Endothelial cell of umbilical vein (primary cell): ENCODE measurements at regions of chr15 and their contacts with region 1.

Region 1: DNA sequence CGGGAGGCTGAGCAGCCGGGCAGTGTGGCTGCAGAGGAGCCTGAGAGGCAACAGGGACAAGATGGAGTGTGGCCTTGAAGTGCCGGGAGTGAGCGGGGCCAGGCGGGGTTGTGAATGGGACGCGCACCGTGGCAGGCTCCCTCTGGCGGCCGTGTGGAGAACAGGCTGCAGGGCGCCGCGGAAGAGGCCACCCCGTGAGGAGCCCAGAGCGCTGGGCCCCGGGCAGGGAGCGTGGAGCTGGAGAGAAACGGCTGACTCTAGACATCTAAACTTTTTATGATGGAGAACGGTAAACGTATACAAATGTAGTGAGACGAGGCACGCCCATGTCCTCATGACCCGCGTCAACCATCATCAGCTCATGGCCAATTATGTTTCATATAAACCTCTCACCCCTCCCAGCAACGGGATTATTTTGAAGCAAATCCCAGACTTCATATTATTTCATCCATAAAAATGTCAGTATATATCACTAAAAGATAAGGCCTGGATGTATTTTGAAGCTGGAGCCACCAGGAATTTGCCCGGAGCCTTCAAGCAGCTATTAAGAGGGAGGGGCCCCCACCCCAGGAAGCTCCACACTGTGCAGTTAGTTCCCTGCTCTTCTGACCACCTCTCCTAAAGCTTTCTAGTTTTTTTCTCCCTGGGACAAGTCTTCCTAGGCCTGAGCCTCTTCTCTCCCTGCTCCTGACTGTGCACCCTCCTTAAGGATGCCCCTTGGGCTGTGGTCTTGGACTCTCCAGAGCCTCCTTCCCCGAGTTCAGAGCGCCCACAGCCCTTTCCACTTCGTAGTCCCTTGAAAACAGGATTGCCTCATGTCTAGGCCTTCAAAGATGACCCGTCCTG is 149.4 kb downstream of the SMAD6 start:
- DNase-seq: peak; percentile 78
- H3K4me3 ChIP-seq: no peak overlapping the region
- H3K27ac ChIP-seq: no peak overlapping the region
- H3K4me1 ChIP-seq: peaks cover 14% of the 10 kb centered on the region
- H3K27me3 ChIP-seq: no peaks in the 10 kb centered on the region
- CTCF ChIP-seq: peak; percentile 91 to 99
- POLR2A ChIP-seq: peak; percentile 37

Region 2: GRCh38 chr15:66619151-66619903 is 232.1 kb before region 1 on chr15:
- CTCF ChIA-PET with region 1: interaction called, 26 read pairs
- POLR2A ChIA-PET with region 1: interaction called, 3 read pairs
- dilution Hi-C with region 1: no loop called
- intact Hi-C with region 1: loop called (anchors 1 kb)
- DNase-seq: peak; percentile 72
- H3K4me3 ChIP-seq: no peak overlapping the region
- H3K27ac ChIP-seq: peak overlapping the region; percentile 88
- H3K4me1 ChIP-seq: peaks cover 52% of the 10 kb centered on the region
- H3K27me3 ChIP-seq: no peaks in the 10 kb centered on the region
- CTCF ChIP-seq: peak; percentile 91 to 95
- POLR2A ChIP-seq: no peak

Region 3: DNA sequence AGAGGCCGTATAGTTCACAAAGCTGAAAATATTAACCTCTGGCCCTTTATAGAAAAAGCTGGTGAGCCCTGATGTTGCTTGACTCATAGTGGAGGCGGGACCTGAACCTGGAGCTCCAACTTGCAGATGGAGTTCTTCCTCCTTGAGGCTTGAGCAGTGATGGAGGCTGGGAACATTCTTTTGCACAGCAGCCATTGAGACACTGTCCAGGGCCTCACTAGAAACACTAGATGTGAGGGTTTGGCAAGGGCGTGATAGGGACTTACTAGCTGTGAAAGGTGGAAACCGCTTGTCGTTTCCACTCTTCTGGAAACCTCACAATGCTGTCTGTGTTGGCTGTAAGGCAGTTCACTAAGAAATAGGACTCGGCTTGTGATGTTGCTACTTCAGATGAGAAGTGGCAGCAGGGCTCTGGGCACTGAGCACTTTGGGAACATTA is 136.9 kb before region 1 on chr15:
- CTCF ChIA-PET with region 1: interaction called, 157 read pairs
- POLR2A ChIA-PET with region 1: no interaction called
- dilution Hi-C with region 1: no loop called
- intact Hi-C with region 1: no loop called
- DNase-seq: peak; percentile 34
- H3K4me3 ChIP-seq: no peak overlapping the region
- H3K27ac ChIP-seq: peak overlapping the region; percentile 11
- H3K4me1 ChIP-seq: peaks cover 36% of the 10 kb centered on the region
- H3K27me3 ChIP-seq: no peaks in the 10 kb centered on the region
- CTCF ChIP-seq: no peak
- POLR2A ChIP-seq: no peak

Region 4: DNA sequence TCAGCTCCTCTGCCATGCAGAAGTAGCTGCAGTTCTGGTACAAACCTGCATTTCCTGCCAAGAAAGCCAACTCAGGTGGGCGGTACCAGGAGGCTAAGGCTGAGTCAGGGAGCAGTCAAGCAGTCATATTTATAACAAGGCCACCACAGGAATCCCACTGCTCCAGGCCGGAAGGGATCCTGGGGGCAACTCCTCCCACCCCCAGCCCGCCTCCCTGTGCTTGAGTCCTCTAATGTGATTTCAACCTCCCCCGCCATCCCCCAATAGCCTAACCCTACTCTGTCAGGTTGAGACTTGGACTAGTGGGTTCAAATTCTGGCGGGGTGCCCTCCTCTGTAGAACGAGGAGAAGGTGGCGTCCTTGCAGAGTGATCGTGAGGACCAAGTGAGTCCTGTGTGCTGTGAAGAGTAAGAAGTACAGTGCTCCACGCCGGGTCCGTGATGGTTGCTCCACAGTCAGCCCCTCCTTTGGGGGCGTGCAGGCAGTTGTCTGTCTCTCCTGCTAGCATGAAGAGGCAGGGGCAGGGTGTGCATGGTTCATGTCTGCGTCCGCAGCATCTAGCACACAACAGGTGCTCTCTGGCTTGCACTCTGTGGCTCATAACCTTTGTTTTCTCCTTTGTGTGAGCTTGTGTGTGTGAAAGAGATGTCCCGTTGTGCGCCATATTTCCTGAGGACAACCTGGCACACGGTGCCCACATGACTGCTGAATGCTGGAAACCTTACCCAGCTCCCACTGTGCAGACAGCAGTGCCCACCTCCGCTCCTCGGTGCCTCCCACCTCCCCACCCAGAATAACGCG is 71.1 kb before region 1 on chr15:
- CTCF ChIA-PET with region 1: interaction called, 80 read pairs
- POLR2A ChIA-PET with region 1: no interaction called
- dilution Hi-C with region 1: no loop called
- intact Hi-C with region 1: no loop called
- DNase-seq: no peak
- H3K4me3 ChIP-seq: no peak overlapping the region
- H3K27ac ChIP-seq: no peak overlapping the region
- H3K4me1 ChIP-seq: peaks cover 4% of the 10 kb centered on the region
- H3K27me3 ChIP-seq: no peaks in the 10 kb centered on the region
- CTCF ChIP-seq: no peak
- POLR2A ChIP-seq: no peak

Region 5: GRCh38 chr15:66809664-66810063 is 41.8 kb before region 1 on chr15:
- CTCF ChIA-PET with region 1: interaction called, 13 read pairs
- POLR2A ChIA-PET with region 1: no interaction called
- dilution Hi-C with region 1: no loop called
- intact Hi-C with region 1: no loop called
- DNase-seq: no peak
- H3K4me3 ChIP-seq: no peak overlapping the region
- H3K27ac ChIP-seq: no peak overlapping the region
- H3K4me1 ChIP-seq: peaks cover 4% of the 10 kb centered on the region
- H3K27me3 ChIP-seq: no peaks in the 10 kb centered on the region
- CTCF ChIP-seq: no peak
- POLR2A ChIP-seq: no peak

Region 6: GRCh38 chr15:66946578-66947164 is 95.2 kb after region 1 on chr15:
- CTCF ChIA-PET with region 1: no interaction called
- POLR2A ChIA-PET with region 1: no interaction called
- dilution Hi-C with region 1: no loop called
- intact Hi-C with region 1: no loop called
- DNase-seq: peak; percentile 70
- H3K4me3 ChIP-seq: no peak overlapping the region
- H3K27ac ChIP-seq: no peak overlapping the region
- H3K4me1 ChIP-seq: peaks cover 4% of the 10 kb centered on the region
- H3K27me3 ChIP-seq: no peaks in the 10 kb centered on the region
- CTCF ChIP-seq: peak; percentile 81
- POLR2A ChIP-seq: no peak